A549 (cell line): ENCODE measurements at regions of chr12 and their contacts with region 1.

Region 1: GRCh38 chr12:6470375-6471163 is at the start of gene VAMP1:
- DNase-seq: peak; percentile 98
- ATAC-seq: peak; percentile 95 to 96
- H3K4me3 ChIP-seq: peak within 1 kb of the TSS; percentile 68
- H3K27ac ChIP-seq: peak within 1 kb of the TSS; percentile 81 to 90
- H3K4me1 ChIP-seq: peaks cover 38% of the 10 kb centered on the region
- CTCF ChIP-seq: no peak
- EP300 ChIP-seq: no peak
- POLR2A ChIP-seq: peak; percentile 100
- RAD21 ChIP-seq: no peak
- polyA plus RNA-seq, gene VAMP1: 17.6 and 28.8 TPM in 2 replicates

Region 2: DNA sequence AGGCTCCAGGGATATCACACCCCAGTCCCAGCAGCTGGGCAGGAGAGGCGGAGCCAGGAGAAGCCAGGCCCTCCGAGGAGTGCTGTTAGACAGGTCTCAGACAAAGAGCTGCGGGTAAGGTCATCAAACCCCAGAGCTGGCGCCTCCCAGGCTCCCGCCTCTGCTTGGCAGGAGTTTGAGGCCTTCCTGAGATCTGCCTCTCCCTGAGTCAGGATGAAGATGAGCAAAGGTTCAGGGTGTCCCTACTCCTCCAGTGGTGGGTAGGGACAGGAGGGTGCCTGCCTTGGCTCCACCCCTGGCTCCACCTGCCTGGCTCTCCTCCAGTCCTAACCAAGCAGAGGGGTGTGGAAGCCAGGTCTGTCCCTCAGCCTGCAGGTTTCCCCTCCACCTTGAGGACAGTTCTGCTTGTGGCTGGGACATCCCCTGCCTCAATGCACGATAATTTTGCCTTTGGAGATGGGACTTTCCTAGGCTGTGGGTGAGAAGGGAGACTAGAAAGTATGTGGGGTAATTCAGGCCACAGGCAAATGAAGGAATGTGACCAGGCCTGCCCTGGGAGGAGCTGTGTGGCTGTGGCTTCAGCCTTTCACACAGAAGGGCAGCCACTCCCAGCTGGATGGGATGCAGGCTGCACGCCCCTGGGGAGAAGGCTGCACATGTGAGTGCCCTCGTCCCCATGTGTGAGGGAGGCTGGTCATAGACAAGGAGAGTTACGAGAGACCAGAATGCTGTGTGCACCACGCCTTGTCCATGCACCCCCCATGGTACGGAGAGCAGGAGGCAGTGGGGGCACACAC is 157.8 kb before region 1 on chr12:
- CTCF ChIA-PET with region 1: interaction called, 19 read pairs
- POLR2A ChIA-PET with region 1: interaction called, 4 read pairs
- DNase-seq: no peak
- ATAC-seq: peak; percentile 7 to 28
- H3K4me3 ChIP-seq: no peak overlapping the region
- H3K27ac ChIP-seq: peak overlapping the region; percentile 28 to 68; a peak in 4 of 6 replicates
- H3K4me1 ChIP-seq: peaks cover 33% of the 10 kb centered on the region
- CTCF ChIP-seq: no peak
- EP300 ChIP-seq: no peak
- POLR2A ChIP-seq: no peak
- RAD21 ChIP-seq: no peak

Region 3: DNA sequence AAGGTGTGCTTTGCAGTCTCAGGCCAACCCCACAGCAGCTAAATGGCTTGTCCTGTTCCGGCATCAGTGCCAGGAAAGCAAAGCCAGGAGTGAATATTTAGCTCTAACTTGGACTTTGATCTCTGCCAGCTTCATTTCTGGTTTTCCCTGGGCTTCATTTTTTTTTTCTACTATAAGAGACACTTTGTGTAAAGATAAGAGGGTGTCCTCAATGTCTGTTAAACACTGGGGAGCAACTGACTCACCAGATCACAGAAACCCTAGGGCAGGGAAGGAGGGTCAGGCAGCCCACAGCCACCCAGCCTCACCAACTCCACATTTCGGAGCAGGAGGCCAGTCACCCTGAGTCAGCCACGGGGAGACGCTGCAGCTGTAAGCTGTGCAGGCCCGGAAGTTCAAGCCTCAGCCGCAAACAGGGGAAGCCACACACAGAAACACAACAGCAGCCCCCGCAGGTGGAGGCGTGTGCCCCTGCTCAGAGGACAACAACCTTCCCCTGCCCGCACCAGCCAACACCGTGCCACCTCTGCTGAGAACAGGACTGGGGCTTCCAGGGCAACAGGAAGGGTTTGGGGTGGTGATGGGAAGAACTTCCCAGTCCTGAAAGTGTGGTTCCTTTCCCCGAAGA is 135.0 kb before region 1 on chr12:
- CTCF ChIA-PET with region 1: interaction called, 29 read pairs
- POLR2A ChIA-PET with region 1: interaction called, 10 read pairs
- DNase-seq: peak; percentile 86 to 88
- ATAC-seq: peak; percentile 40 to 43
- H3K4me3 ChIP-seq: peak overlapping the region; percentile 26
- H3K27ac ChIP-seq: peak overlapping the region; percentile 95 to 98
- H3K4me1 ChIP-seq: peaks cover 80% of the 10 kb centered on the region
- CTCF ChIP-seq: peak; percentile 47
- EP300 ChIP-seq: no peak
- POLR2A ChIP-seq: peak; percentile 26
- RAD21 ChIP-seq: peak; percentile 58 to 66; a peak in 4 of 5 replicates

Region 4: DNA sequence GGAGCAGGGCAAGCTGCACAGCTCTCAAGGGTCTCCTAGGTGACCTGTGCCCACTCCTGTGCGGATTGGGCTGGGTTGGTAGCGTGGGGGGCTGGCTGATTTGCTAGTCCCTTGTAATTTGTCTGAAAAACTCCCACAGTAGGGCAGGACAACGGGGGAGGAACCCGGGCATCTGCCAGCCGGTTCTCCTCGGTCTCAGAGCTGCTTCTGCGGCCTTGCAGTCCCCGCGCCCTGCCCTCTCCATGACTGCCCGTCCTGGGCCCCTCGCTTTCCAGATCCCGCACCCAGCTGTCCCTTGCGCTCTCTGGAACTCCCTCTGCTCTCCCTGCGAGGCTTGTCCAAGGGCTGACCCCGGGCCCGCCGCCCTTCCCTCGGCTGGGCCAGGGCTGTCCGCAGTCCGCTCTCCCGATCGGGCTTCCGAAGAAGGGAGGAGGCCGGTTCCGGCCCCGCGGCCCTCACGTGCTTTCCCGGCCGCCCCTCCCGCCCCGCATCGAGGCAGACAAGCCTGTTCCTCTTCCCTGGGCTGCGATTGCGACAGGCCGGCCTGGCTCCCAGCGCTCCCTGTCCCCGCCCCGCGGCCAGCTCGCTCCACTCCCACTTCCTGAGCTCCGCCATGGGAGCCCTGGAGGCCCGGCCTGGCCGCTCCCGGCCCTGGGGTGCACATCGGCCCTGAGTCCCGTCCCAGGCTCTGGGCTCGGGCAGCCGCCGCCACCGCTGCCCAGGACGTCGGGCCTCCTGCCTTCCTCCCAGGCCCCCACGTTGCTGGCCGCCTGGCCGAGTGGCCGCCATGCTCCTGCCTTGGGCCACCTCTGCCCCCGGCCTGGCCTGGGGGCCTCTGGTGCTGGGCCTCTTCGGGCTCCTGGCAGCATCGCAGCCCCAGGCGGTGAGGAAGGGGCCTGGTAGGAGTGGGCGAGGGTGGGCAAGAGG is 86.7 kb before region 1 on chr12 and contains the start of gene LTBR:
- CTCF ChIA-PET with region 1: interaction called, 14 read pairs
- POLR2A ChIA-PET with region 1: interaction called, 3 read pairs
- DNase-seq: peak; percentile 83 to 91
- ATAC-seq: peak; percentile 94 to 96
- H3K4me3 ChIP-seq: peak within 1 kb of the TSS; percentile 83
- H3K27ac ChIP-seq: peak within 1 kb of the TSS; percentile 99 to 100
- H3K4me1 ChIP-seq: peaks cover 42% of the 10 kb centered on the region
- CTCF ChIP-seq: no peak
- EP300 ChIP-seq: no peak
- POLR2A ChIP-seq: peak; percentile 66
- RAD21 ChIP-seq: peak in 1 of 2 experiments; percentile 55; a peak in 4 of 5 replicates
- polyA plus RNA-seq, gene LTBR: 57.3 and 63.9 TPM in 2 replicates

Region 5: GRCh38 chr12:6434205-6435140 is 36.1 kb before region 1 on chr12:
- CTCF ChIA-PET with region 1: interaction called, 56 read pairs
- POLR2A ChIA-PET with region 1: interaction called, 3 read pairs
- DNase-seq: no peak
- ATAC-seq: no peak
- H3K4me3 ChIP-seq: no peak overlapping the region
- H3K27ac ChIP-seq: peak overlapping the region; percentile 2 to 52; a peak in 3 of 6 replicates
- H3K4me1 ChIP-seq: peaks cover 24% of the 10 kb centered on the region
- CTCF ChIP-seq: no peak
- EP300 ChIP-seq: no peak
- POLR2A ChIP-seq: no peak
- RAD21 ChIP-seq: no peak

Region 6: GRCh38 chr12:6493497-6494257 is 23.1 kb after region 1 on chr12 and contains the start of gene NCAPD2:
- CTCF ChIA-PET with region 1: interaction called, 28 read pairs
- POLR2A ChIA-PET with region 1: interaction called, 34 read pairs
- DNase-seq: peak; percentile 90 to 98
- ATAC-seq: peak; percentile 94 to 95
- H3K4me3 ChIP-seq: peak within 1 kb of the TSS; percentile 80
- H3K27ac ChIP-seq: peak within 1 kb of the TSS; percentile 90 to 93
- H3K4me1 ChIP-seq: peaks cover 25% of the 10 kb centered on the region
- CTCF ChIP-seq: no peak
- EP300 ChIP-seq: no peak
- POLR2A ChIP-seq: peak; percentile 69
- RAD21 ChIP-seq: no peak
- polyA plus RNA-seq, gene NCAPD2: 130 and 145 TPM in 2 replicates

Region 7: DNA sequence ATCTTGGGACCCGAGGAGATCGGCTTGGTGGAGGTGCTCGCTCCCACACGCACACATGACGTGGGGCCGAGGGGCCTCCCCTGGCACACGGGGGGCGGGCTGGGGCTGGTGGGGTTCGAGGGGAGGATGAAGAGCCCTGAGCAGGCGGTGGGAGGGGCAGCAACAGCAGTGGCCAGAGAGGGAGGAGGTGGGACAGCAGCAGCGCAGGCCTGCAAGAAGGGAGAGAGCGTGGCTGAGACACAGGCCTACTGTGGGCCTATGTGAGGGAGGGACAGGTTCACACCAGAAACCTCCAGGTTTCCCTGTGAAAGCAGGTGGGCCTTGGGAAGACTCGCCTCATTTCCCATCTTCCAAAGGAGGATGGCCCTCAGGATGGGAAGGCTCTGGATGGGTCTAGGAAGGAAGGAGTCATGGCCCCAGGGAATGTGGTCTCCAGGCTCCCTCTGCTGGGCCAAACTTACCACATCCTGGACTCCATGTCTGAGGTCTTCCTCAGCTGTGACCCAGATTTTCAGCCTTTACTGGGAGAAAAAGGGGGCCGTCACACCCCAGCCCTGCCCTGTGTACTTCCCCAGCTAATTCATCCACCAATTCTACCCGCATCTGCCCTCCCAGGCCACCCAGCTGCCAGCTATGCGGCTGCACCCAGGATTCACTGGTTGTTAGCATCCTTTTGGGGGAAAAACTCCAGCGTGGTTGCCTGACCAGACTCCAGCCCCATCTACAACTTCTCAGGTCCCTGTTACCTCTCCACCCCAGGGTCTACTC is 227.2 kb after region 1 on chr12:
- CTCF ChIA-PET with region 1: no interaction called
- POLR2A ChIA-PET with region 1: no interaction called
- DNase-seq: peak; percentile 76 to 82
- ATAC-seq: peak; percentile 77 to 93
- H3K4me3 ChIP-seq: no peak overlapping the region
- H3K27ac ChIP-seq: no peak overlapping the region
- H3K4me1 ChIP-seq: peaks cover 7% of the 10 kb centered on the region; the same call in 1 of the 3 replicates
- CTCF ChIP-seq: peak; percentile 64
- EP300 ChIP-seq: no peak
- POLR2A ChIP-seq: no peak
- RAD21 ChIP-seq: peak; percentile 76 to 91